ENCODE measurements at regions of chr20 and their contacts with region 1.

Region 1: GRCh38 chr20:34069341-34070078 is 42.5 kb downstream of the EIF2S2 start:
- DNase-seq: peak; percentile 74
- ATAC-seq: peak; percentile 80
- H3K4me3 Mint-ChIP-seq: no peak overlapping the region
- H3K27ac Mint-ChIP-seq: peak overlapping the region; percentile 24
- H3K4me1 Mint-ChIP-seq: peaks cover 26% of the 10 kb centered on the region
- H3K27me3 Mint-ChIP-seq: no peaks in the 10 kb centered on the region

Region 2: DNA sequence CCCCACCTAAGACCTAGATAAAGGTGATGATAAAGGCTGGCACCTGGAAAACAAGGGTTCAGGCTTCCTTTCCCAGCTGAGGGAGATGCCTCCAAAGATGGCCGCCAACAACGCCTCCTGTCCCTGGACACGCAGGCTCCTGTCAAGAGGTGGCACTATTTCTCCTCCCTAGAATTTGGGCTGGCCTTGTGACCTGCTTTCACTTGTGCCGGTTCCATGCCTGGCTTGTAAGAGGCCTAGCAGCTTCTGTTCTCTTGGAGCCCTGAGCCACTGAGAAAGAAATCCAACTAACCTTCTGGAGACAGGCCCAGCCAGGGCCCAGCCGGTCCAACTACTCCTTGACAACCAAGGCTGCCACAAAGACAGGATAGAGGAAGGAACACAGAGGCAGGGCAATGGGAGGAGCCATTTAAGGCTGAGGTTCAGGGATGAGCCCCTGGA is 136.0 kb before region 1 on chr20:
- CTCF ChIA-PET with region 1: interaction called, 10 read pairs
- DNase-seq: peak; percentile 76
- ATAC-seq: peak; percentile 91
- H3K4me3 Mint-ChIP-seq: no peak overlapping the region
- H3K27ac Mint-ChIP-seq: no peak overlapping the region
- H3K4me1 Mint-ChIP-seq: no peaks in the 10 kb centered on the region
- H3K27me3 Mint-ChIP-seq: peaks cover 4% of the 10 kb centered on the region

Region 3: GRCh38 chr20:34058831-34059230 is 10.7 kb before region 1 on chr20:
- CTCF ChIA-PET with region 1: interaction called, 10 read pairs
- DNase-seq: no peak
- ATAC-seq: peak; percentile 76
- H3K4me3 Mint-ChIP-seq: no peak overlapping the region
- H3K27ac Mint-ChIP-seq: no peak overlapping the region
- H3K4me1 Mint-ChIP-seq: peaks cover 41% of the 10 kb centered on the region
- H3K27me3 Mint-ChIP-seq: no peaks in the 10 kb centered on the region